PC-3 (cell line): ENCODE measurements at regions of chr22 and their contacts with region 1.

Region 1: GRCh38 chr22:37752466-37753087 is 55.2 kb upstream of the GCAT start:
- DNase-seq: peak; percentile 98
- ATAC-seq: peak; percentile 75
- H3K4me3 ChIP-seq: no peak overlapping the region
- H3K27ac ChIP-seq: peak overlapping the region; percentile 91
- H3K4me1 ChIP-seq: peaks cover 69% of the 10 kb centered on the region
- H3K27me3 ChIP-seq: no peaks in the 10 kb centered on the region
- CTCF ChIP-seq: no peak

Region 2: DNA sequence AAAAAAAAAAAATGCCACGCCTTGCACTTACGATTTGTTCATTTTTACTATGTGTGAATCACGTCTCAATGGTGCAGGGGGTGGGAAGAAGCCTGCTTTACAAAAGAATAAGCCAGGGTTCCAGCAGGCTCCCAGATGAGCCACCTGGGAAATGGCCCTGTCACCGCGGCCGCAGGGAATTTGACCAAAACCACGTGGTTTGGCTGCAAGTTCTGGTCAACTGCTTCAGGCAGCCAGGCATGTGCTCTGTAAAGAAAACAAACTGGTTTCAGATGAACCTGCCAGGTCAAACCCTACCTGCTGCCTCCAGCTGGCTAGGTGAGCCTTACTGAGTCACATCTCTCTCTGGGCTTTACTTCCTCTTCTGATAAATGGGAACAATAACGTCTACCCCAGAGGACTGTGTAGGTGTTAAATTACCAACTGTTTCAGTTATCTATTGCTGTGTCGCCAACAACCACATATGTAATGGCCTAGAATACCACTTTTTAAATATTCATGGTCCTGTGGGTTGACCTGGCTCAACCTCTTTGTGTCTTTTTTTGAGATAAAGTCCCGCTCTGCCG is 24.6 kb after region 1 on chr22:
- CTCF ChIA-PET with region 1: interaction called, 5 read pairs
- POLR2A ChIA-PET with region 1: interaction called, 4 read pairs
- intact Hi-C with region 1: loop called (anchors 1 kb)
- DNase-seq: peak; percentile 96
- ATAC-seq: peak; percentile 69
- H3K4me3 ChIP-seq: no peak overlapping the region
- H3K27ac ChIP-seq: peak overlapping the region; percentile 99
- H3K4me1 ChIP-seq: peaks cover 46% of the 10 kb centered on the region
- H3K27me3 ChIP-seq: no peaks in the 10 kb centered on the region
- CTCF ChIP-seq: no peak

Region 3: GRCh38 chr22:37782340-37783177 is 30.0 kb after region 1 on chr22:
- CTCF ChIA-PET with region 1: interaction called, 5 read pairs
- POLR2A ChIA-PET with region 1: interaction called, 4 read pairs
- intact Hi-C with region 1: loop called (anchors 1 kb)
- DNase-seq: peak; percentile 94
- ATAC-seq: peak; percentile 68
- H3K4me3 ChIP-seq: no peak overlapping the region
- H3K27ac ChIP-seq: peak overlapping the region; percentile 89
- H3K4me1 ChIP-seq: peaks cover 45% of the 10 kb centered on the region
- H3K27me3 ChIP-seq: no peaks in the 10 kb centered on the region
- CTCF ChIP-seq: peak; percentile 50

Region 4: DNA sequence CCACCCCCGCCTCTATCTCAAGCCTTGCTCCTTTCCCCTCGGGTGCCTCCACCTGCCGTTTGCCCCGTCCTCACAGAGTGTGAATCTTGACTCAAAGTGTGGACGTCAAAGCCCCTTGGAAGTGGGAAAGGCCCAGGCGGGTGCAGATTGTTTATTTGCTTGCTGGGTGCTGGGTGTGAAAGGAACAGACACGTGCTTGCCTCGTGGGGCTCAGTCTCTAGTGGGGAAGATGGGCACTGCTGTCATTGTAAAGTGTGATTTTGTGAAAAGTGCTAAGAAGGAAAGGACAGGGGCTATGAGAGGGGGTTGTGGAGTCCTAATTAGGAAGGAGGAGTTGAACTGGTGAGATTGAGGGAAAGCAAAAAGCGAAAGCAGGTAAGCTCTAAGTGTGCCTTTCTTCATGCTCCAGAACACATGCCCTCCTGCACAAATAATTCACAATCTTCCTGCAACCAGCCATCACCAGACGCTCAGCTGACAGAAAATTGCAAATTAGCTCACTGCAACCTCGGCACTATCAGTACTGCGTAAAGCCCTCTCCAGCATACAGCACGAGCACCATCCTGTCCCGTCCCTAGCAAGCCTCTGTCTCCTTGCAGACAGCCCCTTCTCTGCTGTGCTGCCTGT is 45.4 kb after region 1 on chr22:
- CTCF ChIA-PET with region 1: no interaction called
- POLR2A ChIA-PET with region 1: no interaction called
- intact Hi-C with region 1: no loop called
- DNase-seq: no peak
- ATAC-seq: no peak
- H3K4me3 ChIP-seq: no peak overlapping the region
- H3K27ac ChIP-seq: no peak overlapping the region
- H3K4me1 ChIP-seq: peaks cover 7% of the 10 kb centered on the region
- H3K27me3 ChIP-seq: no peaks in the 10 kb centered on the region
- CTCF ChIP-seq: no peak